ENCODE measurements at regions of chr7 and their contacts with region 1.

Region 1: GRCh38 chr7:107725151-107725740 is 18.7 kb upstream of the CBLL1 start:
- DNase-seq: peak in 7 of 9 donors; percentile 23 to 56 (median 46)
- ATAC-seq: no peak
- H3K4me3 ChIP-seq: no peak overlapping the region
- H3K4me3 Mint-ChIP-seq: no peak overlapping the region
- H3K27ac ChIP-seq: no peak overlapping the region
- H3K27ac Mint-ChIP-seq: no peak overlapping the region
- H3K4me1 ChIP-seq: no peaks in the 10 kb centered on the region
- H3K4me1 Mint-ChIP-seq: no peaks in the 10 kb centered on the region
- H3K27me3 ChIP-seq: peaks cover 0 to 3% of the 10 kb centered on the region in 2 donors
- H3K27me3 Mint-ChIP-seq: peaks cover 9 to 29% (median 17%) of the 10 kb centered on the region in 5 donors

Region 2: DNA sequence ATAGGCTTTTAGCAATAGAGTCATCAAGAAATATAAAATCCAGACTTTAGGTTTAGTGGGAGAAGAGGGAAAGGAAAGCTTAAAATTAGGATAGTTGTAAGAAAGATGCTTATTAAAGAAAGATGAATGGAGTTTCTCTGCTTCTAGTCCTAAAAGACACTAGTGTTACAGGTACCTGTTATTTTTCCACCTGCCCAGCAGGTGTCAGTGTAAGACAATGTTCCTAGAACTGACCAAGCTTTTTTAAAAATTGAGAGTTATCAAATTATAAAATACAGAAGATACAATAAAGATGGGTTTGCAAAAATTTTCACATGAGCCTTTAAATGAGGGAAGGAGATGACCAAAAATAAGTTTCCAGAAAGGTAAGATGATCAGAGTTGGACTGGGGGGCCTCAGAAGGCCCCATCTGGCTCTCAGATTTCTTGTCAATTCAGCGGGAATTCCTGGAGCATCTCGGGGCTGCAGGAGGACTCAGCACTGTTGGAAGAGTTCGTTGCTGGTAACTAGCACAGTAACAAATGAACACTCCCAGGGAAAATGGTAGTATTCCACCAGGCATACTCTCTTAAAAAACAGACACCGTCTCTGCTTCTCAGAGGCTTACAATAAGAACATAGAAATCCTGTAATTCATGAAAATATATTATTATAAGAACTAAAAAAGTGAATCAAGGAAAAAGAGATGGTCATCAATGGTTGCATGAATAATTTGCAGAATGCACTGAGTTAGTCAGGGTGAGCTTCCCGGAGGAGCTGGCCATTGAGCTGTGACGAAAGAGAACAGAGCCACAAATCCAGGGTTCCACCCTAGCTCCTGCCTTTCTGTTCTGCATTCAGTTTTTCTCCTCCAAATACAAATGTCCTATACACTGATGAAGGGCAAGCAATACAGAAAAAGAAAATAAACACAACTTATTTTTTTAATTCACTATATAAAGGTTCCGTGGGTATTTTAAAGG is 932.0 kb before region 1 on chr7:
- CTCF ChIA-PET with region 1: interaction called, 4 read pairs
- POLR2A ChIA-PET with region 1: no interaction called
- intact Hi-C with region 1: loop called (anchors 1 to 10 kb)
- DNase-seq: peak in 6 of 9 donors; percentile 31 to 59 (median 51)
- ATAC-seq: peak; percentile 76
- H3K4me3 ChIP-seq: no peak overlapping the region
- H3K4me3 Mint-ChIP-seq: no peak overlapping the region
- H3K27ac ChIP-seq: no peak overlapping the region
- H3K27ac Mint-ChIP-seq: no peak overlapping the region
- H3K4me1 ChIP-seq: no peaks in the 10 kb centered on the region
- H3K4me1 Mint-ChIP-seq: peaks cover 0 to 4% (median 0%) of the 10 kb centered on the region in 7 donors
- H3K27me3 ChIP-seq: no peaks in the 10 kb centered on the region
- H3K27me3 Mint-ChIP-seq: no peaks in the 10 kb centered on the region

Region 3: DNA sequence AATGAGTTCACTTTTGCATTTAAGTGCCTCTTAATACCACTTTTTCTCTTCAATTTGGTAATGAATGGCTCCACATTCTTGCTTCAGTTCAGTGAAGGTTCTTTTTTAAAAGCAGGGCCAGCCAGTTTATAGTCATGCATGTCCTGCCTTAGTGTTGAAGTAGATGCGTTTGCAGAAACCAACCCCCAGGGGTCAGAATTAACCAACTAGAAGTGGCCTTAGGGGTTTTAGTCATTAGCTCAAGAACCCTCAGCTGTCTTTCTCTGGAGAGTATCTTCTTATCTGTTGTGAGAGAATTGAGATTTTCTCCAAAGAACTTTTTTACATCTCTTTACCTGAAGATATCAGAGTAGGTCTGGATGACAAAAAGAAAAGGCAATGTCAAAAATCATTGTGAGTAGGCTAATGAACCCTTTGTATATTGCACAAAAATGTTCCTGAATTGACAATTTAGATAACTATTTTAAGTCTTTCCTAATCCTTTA is 778.0 kb before region 1 on chr7:
- CTCF ChIA-PET with region 1: no interaction called
- POLR2A ChIA-PET with region 1: no interaction called
- intact Hi-C with region 1: loop called in 1 of 2 experiments (anchors 2 kb)
- DNase-seq: peak in 7 of 9 donors; percentile 9 to 45 (median 31)
- ATAC-seq: peak; percentile 69
- H3K4me3 ChIP-seq: no peak overlapping the region
- H3K4me3 Mint-ChIP-seq: no peak overlapping the region
- H3K27ac ChIP-seq: no peak overlapping the region
- H3K27ac Mint-ChIP-seq: no peak overlapping the region
- H3K4me1 ChIP-seq: no peaks in the 10 kb centered on the region
- H3K4me1 Mint-ChIP-seq: peaks cover 0 to 4% (median 0%) of the 10 kb centered on the region in 7 donors
- H3K27me3 ChIP-seq: no peaks in the 10 kb centered on the region
- H3K27me3 Mint-ChIP-seq: peaks cover 0 to 13% (median 4%) of the 10 kb centered on the region in 5 donors

Region 4: DNA sequence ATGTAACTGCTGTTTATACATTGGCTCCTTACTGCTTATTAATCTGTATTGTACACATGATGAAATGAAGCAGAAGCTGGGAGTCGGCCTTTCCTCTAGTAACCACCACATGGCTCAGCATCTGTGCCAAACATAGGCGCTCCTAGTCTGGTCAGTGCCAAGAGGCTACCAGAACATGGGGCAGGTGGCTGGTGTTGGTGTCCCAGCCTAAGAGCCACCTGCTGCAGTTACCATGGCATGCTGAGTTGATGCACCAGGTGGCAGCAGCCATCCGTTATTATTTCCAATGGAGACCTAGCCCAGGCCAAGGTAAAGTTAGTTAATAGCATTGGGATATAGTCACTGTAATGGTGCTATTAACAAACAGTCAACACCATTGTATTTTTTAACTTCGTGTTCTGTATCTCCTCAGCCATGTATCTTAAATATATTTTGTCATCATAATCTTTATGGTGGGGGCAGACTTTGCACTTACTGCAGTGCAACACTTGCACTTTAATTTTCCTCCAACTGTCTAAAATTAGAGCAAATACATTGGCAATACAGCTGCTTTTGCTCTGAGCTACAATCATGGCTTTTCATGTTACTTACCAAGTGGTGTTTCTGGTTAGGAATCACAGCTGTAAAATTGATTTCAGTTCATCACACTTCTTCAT is 523.3 kb before region 1 on chr7:
- CTCF ChIA-PET with region 1: interaction called, 3 read pairs
- POLR2A ChIA-PET with region 1: no interaction called
- intact Hi-C with region 1: loop called (anchors 1 to 2 kb)
- DNase-seq: peak in 2 of 9 donors; percentile 6 to 15
- ATAC-seq: peak; percentile 60
- H3K4me3 ChIP-seq: no peak overlapping the region
- H3K4me3 Mint-ChIP-seq: no peak overlapping the region
- H3K27ac ChIP-seq: no peak overlapping the region
- H3K27ac Mint-ChIP-seq: peak overlapping the region in 1 of 9 donors; percentile 32
- H3K4me1 ChIP-seq: no peaks in the 10 kb centered on the region
- H3K4me1 Mint-ChIP-seq: peaks cover 0 to 7% (median 0%) of the 10 kb centered on the region in 7 donors
- H3K27me3 ChIP-seq: no peaks in the 10 kb centered on the region
- H3K27me3 Mint-ChIP-seq: no peaks in the 10 kb centered on the region

Region 5: GRCh38 chr7:107462740-107463444 is 262.4 kb before region 1 on chr7:
- CTCF ChIA-PET with region 1: interaction called, 30 read pairs
- POLR2A ChIA-PET with region 1: no interaction called
- intact Hi-C with region 1: loop called (anchors 1 kb)
- DNase-seq: peak; percentile 10 to 47 (median 36)
- ATAC-seq: peak; percentile 82
- H3K4me3 ChIP-seq: no peak overlapping the region
- H3K4me3 Mint-ChIP-seq: no peak overlapping the region
- H3K27ac ChIP-seq: no peak overlapping the region
- H3K27ac Mint-ChIP-seq: peak overlapping the region in 1 of 9 donors; percentile 19
- H3K4me1 ChIP-seq: no peaks in the 10 kb centered on the region
- H3K4me1 Mint-ChIP-seq: peaks cover 0 to 6% (median 0%) of the 10 kb centered on the region in 7 donors
- H3K27me3 ChIP-seq: no peaks in the 10 kb centered on the region
- H3K27me3 Mint-ChIP-seq: no peaks in the 10 kb centered on the region

Region 6: DNA sequence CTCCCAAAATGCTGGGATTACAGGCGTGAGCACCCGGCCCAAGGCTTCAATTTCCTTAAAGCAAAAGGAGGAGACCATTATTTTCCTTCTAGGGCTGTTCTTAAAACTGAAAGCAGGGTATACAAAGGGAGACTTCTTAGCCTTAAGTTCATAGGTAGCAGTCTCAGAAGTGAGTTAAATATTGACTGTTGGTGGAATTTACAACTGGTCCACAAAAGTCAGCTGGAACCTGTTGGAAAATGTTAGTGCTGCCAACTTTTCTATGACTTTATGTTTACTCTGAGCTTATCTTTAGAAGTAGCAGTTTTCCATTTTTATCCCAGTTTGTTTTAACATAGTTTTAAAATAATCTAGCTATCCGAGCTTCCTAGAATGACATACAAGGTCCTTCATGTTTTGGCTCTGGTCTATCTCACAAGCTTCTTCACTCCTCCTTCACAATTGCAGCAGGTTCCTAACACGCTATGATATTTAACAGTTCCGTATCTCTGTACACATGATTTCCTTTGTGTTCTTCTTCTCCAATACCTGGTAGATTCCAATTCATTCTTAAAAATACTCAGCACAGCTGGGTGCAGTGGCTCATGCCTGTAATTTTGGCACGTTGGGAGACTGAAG is 74.5 kb after region 1 on chr7:
- CTCF ChIA-PET with region 1: no interaction called
- POLR2A ChIA-PET with region 1: no interaction called
- intact Hi-C with region 1: no loop called
- DNase-seq: no peak
- ATAC-seq: no peak
- H3K4me3 ChIP-seq: no peak overlapping the region
- H3K4me3 Mint-ChIP-seq: no peak overlapping the region
- H3K27ac ChIP-seq: no peak overlapping the region
- H3K27ac Mint-ChIP-seq: no peak overlapping the region
- H3K4me1 ChIP-seq: no peaks in the 10 kb centered on the region
- H3K4me1 Mint-ChIP-seq: peaks cover 0 to 9% (median 0%) of the 10 kb centered on the region in 7 donors
- H3K27me3 ChIP-seq: no peaks in the 10 kb centered on the region
- H3K27me3 Mint-ChIP-seq: peaks cover 0 to 21% (median 13%) of the 10 kb centered on the region in 5 donors

Region 7: GRCh38 chr7:107902381-107902780 is 177.1 kb after region 1 on chr7:
- CTCF ChIA-PET with region 1: no interaction called
- POLR2A ChIA-PET with region 1: no interaction called
- intact Hi-C with region 1: no loop called
- DNase-seq: no peak
- ATAC-seq: no peak
- H3K4me3 ChIP-seq: no peak overlapping the region
- H3K4me3 Mint-ChIP-seq: no peak overlapping the region
- H3K27ac ChIP-seq: no peak overlapping the region
- H3K27ac Mint-ChIP-seq: no peak overlapping the region
- H3K4me1 ChIP-seq: no peaks in the 10 kb centered on the region
- H3K4me1 Mint-ChIP-seq: peaks cover 12 to 58% (median 40%) of the 10 kb centered on the region in 7 donors
- H3K27me3 ChIP-seq: no peaks in the 10 kb centered on the region
- H3K27me3 Mint-ChIP-seq: no peaks in the 10 kb centered on the region